GM12878 (cell line): ENCODE measurements at regions of chr10 and their contacts with region 1.

Region 1: DNA sequence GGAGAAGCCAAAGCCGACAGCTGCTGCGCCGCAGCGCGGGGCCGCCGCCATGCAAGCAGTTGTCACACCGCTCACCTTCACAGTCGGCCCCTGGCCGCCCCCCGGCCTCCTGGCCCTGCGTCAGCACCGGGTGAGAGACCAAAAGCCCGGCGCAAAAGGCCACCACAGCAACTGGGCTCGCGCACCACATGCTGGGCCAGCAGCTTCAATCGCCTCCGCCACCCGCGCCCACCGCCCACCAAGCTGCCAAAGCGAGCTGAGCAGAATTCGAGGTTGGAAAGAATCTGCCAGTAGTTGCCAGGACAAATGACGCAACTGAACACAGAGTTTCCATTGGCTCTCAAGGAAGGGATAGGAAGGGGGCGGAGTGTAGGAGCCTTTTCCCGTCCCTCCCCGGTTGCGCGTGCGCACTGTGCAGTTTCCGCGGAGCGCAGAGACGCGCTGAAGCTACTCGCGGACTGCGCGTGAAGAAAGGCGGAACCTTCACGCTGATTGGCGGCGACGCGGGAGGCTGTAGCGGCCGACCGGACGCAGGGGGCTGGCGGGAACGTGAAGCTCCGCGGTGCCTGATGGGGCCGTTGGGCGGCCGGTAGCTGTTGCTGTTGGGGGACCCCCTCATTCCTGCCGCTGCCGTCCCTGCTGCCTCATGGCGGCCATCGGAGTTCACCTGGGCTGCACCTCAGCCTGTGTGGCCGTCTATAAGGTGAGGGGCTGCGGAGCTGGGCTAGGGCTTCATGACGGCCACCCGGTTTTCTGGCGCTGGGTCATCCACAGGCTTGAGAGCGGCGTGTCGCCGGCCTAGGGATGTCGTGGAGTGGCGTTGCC is at the starts of genes CDNF, HSPA14 and MSANTD7:
- DNase-seq: peak; percentile 98
- ATAC-seq: peak; percentile 98
- H3K4me3 ChIP-seq: peak within 1 kb of the TSS; percentile 92
- H3K27ac ChIP-seq: peak within 1 kb of the TSS; percentile 96
- H3K4me1 ChIP-seq: peaks cover 7% of the 10 kb centered on the region; the same call in 1 of the 2 replicates
- H3K27me3 ChIP-seq: no peaks in the 10 kb centered on the region
- CTCF ChIP-seq: no peak
- EP300 ChIP-seq: no peak
- POLR2A ChIP-seq: peak; percentile 95
- RAD21 ChIP-seq: no peak
- polyA plus RNA-seq, gene CDNF: 0.08 to 0.29 TPM
- polyA plus RNA-seq, gene HSPA14: 44.1 to 46.4 TPM
- polyA plus RNA-seq, gene MSANTD7: 3.5 to 4.5 TPM

Region 2: GRCh38 chr10:14536241-14537213 is 301.4 kb before region 1 on chr10:
- CTCF ChIA-PET with region 1: interaction called, 32 read pairs
- POLR2A ChIA-PET with region 1: interaction called, 3 read pairs
- RAD21 ChIA-PET with region 1: interaction called, 15 read pairs
- SMC1A ChIA-PET with region 1: interaction called, 8 read pairs
- in situ Hi-C with region 1: no loop called
- intact Hi-C with region 1: no loop called
- DNase-seq: no peak
- ATAC-seq: peak; percentile 88
- H3K4me3 ChIP-seq: no peak overlapping the region
- H3K27ac ChIP-seq: no peak overlapping the region
- H3K4me1 ChIP-seq: peaks cover 3% of the 10 kb centered on the region; the same call in 1 of the 2 replicates
- H3K27me3 ChIP-seq: no peaks in the 10 kb centered on the region
- CTCF ChIP-seq: peak; percentile 65 to 69 (median 66); a peak in 5 of 6 replicates
- EP300 ChIP-seq: no peak
- POLR2A ChIP-seq: no peak
- RAD21 ChIP-seq: peak; percentile 71

Region 3: GRCh38 chr10:14604181-14605142 is 233.5 kb before region 1 on chr10:
- CTCF ChIA-PET with region 1: no interaction called
- POLR2A ChIA-PET with region 1: no interaction called
- RAD21 ChIA-PET with region 1: interaction called, 8 read pairs
- SMC1A ChIA-PET with region 1: interaction called, 4 read pairs
- in situ Hi-C with region 1: no loop called
- intact Hi-C with region 1: loop called (anchors 5 kb)
- DNase-seq: no peak
- ATAC-seq: peak; percentile 52
- H3K4me3 ChIP-seq: peak overlapping the region; percentile 77
- H3K27ac ChIP-seq: peak overlapping the region; percentile 84
- H3K4me1 ChIP-seq: peaks cover 44% of the 10 kb centered on the region
- H3K27me3 ChIP-seq: no peaks in the 10 kb centered on the region
- CTCF ChIP-seq: no peak
- EP300 ChIP-seq: no peak
- POLR2A ChIP-seq: peak; percentile 85
- RAD21 ChIP-seq: 0 out of 2 replicates have a peak, but pooled peaks have one; percentile 1

Region 4: GRCh38 chr10:14727465-14727864 is 110.5 kb before region 1 on chr10:
- CTCF ChIA-PET with region 1: no interaction called
- POLR2A ChIA-PET with region 1: no interaction called
- RAD21 ChIA-PET with region 1: no interaction called
- SMC1A ChIA-PET with region 1: no interaction called
- in situ Hi-C with region 1: no loop called
- intact Hi-C with region 1: no loop called
- DNase-seq: no peak
- ATAC-seq: no peak
- H3K4me3 ChIP-seq: no peak overlapping the region
- H3K27ac ChIP-seq: no peak overlapping the region
- H3K4me1 ChIP-seq: no peaks in the 10 kb centered on the region
- H3K27me3 ChIP-seq: peaks cover 0 to 3% of the 10 kb centered on the region in 2 experiments; a peak in 1 of 4 replicates
- CTCF ChIP-seq: no peak
- EP300 ChIP-seq: no peak
- POLR2A ChIP-seq: no peak
- RAD21 ChIP-seq: no peak

Region 5: GRCh38 chr10:14812271-14812670 is 25.7 kb before region 1 on chr10:
- CTCF ChIA-PET with region 1: no interaction called
- POLR2A ChIA-PET with region 1: no interaction called
- RAD21 ChIA-PET with region 1: no interaction called
- SMC1A ChIA-PET with region 1: no interaction called
- in situ Hi-C with region 1: no loop called
- intact Hi-C with region 1: no loop called
- DNase-seq: no peak
- ATAC-seq: peak; percentile 51
- H3K4me3 ChIP-seq: no peak overlapping the region
- H3K27ac ChIP-seq: no peak overlapping the region
- H3K4me1 ChIP-seq: no peaks in the 10 kb centered on the region
- H3K27me3 ChIP-seq: no peaks in the 10 kb centered on the region
- CTCF ChIP-seq: no peak
- EP300 ChIP-seq: no peak
- POLR2A ChIP-seq: no peak
- RAD21 ChIP-seq: no peak

Region 6: DNA sequence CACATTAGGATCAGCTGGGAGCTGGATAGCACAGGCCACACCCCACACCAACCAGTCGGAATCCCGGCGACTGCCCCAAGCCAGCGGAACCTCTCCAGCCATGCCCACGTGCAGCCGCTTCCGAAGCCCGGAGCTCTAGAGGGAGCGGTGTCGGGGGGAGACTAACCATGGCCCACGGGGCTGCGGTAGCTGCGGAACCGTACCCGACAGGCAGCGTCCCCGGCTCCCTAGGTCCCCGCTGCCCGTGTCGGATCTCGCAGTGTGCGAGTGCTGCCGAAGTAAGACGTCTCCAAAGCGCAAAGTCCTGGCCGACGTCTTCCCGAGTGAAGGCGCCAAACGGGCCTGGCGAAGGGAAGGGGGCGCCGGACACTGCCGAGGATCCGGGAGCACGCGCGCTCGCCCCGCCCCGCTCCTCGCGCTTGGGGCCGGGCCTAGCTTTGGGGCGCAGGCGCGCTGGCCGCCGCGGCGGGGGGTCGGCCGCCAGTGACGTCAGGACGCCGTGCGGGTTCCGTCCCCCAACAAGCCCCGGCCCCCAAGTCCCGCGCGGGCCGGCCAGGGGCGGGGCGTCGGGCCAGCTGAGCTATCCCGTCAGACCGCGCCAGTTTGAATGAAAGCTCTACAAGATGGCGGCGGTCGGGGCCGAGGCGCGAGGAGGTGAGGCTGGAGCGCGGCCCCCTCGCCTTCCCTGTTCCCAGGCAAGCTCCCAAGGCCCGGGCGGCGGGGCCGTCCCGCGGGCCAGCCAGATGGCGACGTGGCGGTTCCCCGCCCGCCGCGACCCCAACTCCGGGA is 40.5 kb after region 1 on chr10 and contains the start of gene SUV39H2:
- CTCF ChIA-PET with region 1: interaction called, 14 read pairs
- POLR2A ChIA-PET with region 1: interaction called, 18 read pairs
- RAD21 ChIA-PET with region 1: interaction called, 24 read pairs
- SMC1A ChIA-PET with region 1: interaction called, 16 read pairs
- in situ Hi-C with region 1: no loop called
- intact Hi-C with region 1: loop called (anchors 5 kb)
- DNase-seq: peak; percentile 64
- ATAC-seq: peak; percentile 94
- H3K4me3 ChIP-seq: peak within 1 kb of the TSS; percentile 89
- H3K27ac ChIP-seq: peak within 1 kb of the TSS; percentile 73
- H3K4me1 ChIP-seq: peaks cover 5% of the 10 kb centered on the region; the same call in 1 of the 2 replicates
- H3K27me3 ChIP-seq: no peaks in the 10 kb centered on the region
- CTCF ChIP-seq: no peak
- EP300 ChIP-seq: no peak
- POLR2A ChIP-seq: peak; percentile 88
- RAD21 ChIP-seq: no peak
- polyA plus RNA-seq, gene SUV39H2: 26.5 to 40.3 TPM

Region 7: DNA sequence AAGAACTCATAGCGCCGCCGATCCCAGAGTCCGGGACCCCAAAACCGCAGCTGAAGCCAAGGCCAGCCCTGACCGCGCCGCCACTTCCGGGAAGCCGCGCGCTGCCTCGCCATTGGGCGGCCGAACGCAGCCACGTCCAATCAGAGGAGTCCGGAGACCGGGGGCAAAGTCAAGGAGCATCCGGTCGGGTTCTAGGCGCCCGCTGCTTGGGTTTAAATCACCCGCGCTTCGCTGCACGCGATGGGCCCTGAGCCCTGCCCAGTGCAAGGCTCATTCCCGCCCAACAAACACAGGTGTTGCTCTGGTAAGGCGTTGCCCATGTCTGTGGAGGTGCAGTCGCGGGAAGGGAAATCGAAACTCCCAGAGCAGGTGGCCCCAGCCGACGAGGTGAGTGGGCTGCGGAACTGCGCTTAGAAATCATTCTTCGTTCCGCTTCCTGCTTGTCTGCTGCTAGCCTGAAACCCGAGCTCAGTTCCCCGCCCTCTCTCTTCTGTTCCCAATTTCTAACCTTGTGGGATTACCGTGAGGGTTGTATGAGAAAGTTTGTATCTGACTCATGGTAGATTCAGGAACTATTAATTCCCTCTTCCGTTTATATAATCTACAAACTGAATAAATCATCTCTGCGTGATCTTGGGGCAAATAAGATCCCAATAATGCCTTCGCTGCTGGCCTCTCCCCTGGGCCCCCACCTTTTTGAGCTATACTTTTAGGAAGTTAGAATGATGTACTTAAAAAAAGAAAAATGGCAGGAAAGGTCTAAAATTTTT is 116.2 kb after region 1 on chr10 and contains the start of gene DCLRE1C:
- CTCF ChIA-PET with region 1: interaction called, 10 read pairs
- POLR2A ChIA-PET with region 1: interaction called, 9 read pairs
- RAD21 ChIA-PET with region 1: interaction called, 15 read pairs
- SMC1A ChIA-PET with region 1: interaction called, 16 read pairs
- in situ Hi-C with region 1: no loop called
- intact Hi-C with region 1: loop called (anchors 5 kb)
- DNase-seq: peak; percentile 82
- ATAC-seq: peak; percentile 86
- H3K4me3 ChIP-seq: peak within 1 kb of the TSS; percentile 91
- H3K27ac ChIP-seq: peak within 1 kb of the TSS; percentile 98
- H3K4me1 ChIP-seq: peaks cover 21% of the 10 kb centered on the region
- H3K27me3 ChIP-seq: no peaks in the 10 kb centered on the region
- CTCF ChIP-seq: no peak
- EP300 ChIP-seq: peak in 1 of 2 experiments; percentile 56; a peak in 2 of 4 replicates
- POLR2A ChIP-seq: peak; percentile 80
- RAD21 ChIP-seq: no peak
- polyA plus RNA-seq, gene DCLRE1C: 15.7 to 26.2 TPM

Region 8: GRCh38 chr10:14971867-14972448 is 134.0 kb after region 1 on chr10:
- CTCF ChIA-PET with region 1: interaction called, 16 read pairs
- POLR2A ChIA-PET with region 1: no interaction called
- RAD21 ChIA-PET with region 1: interaction called, 7 read pairs
- SMC1A ChIA-PET with region 1: interaction called, 6 read pairs
- in situ Hi-C with region 1: no loop called
- intact Hi-C with region 1: no loop called
- DNase-seq: no peak
- ATAC-seq: peak; percentile 85
- H3K4me3 ChIP-seq: no peak overlapping the region
- H3K27ac ChIP-seq: no peak overlapping the region
- H3K4me1 ChIP-seq: no peaks in the 10 kb centered on the region
- H3K27me3 ChIP-seq: no peaks in the 10 kb centered on the region
- CTCF ChIP-seq: peak; percentile 53 to 75 (median 54)
- EP300 ChIP-seq: no peak
- POLR2A ChIP-seq: no peak
- RAD21 ChIP-seq: peak; percentile 73